Activated naive CD4-positive, alpha-beta T cell treated with anti-CD3 and anti-CD28 coated beads for 36 hours (primary cell): ENCODE measurements at regions of chr7 and their contacts with region 1.

Region 1: GRCh38 chr7:38369816-38370493 is 96.5 kb upstream of the TARP start:
- DNase-seq: peak; percentile 83
- H3K4me3 Mint-ChIP-seq: no peak overlapping the region
- H3K27ac Mint-ChIP-seq: no peak overlapping the region
- H3K4me1 Mint-ChIP-seq: peaks cover 52% of the 10 kb centered on the region
- H3K27me3 Mint-ChIP-seq: no peaks in the 10 kb centered on the region

Region 2: GRCh38 chr7:37786741-37787569 is 583.0 kb before region 1 on chr7:
- CTCF ChIA-PET with region 1: no interaction called
- intact Hi-C with region 1: loop called (anchors 5 kb)
- DNase-seq: no peak
- H3K4me3 Mint-ChIP-seq: no peak overlapping the region
- H3K27ac Mint-ChIP-seq: peak overlapping the region; percentile 53
- H3K4me1 Mint-ChIP-seq: peaks cover 6% of the 10 kb centered on the region
- H3K27me3 Mint-ChIP-seq: peaks cover 6% of the 10 kb centered on the region

Region 3: GRCh38 chr7:37916673-37917660 is 453.0 kb before region 1 on chr7 and contains the start of gene SFRP4:
- CTCF ChIA-PET with region 1: interaction called, 5 read pairs
- intact Hi-C with region 1: loop called (anchors 1 kb)
- DNase-seq: peak; percentile 17
- H3K4me3 Mint-ChIP-seq: peak within 1 kb of the TSS; percentile 22
- H3K27ac Mint-ChIP-seq: no peak within 1 kb of the TSS
- H3K4me1 Mint-ChIP-seq: peaks cover 14% of the 10 kb centered on the region
- H3K27me3 Mint-ChIP-seq: peaks cover 58% of the 10 kb centered on the region
- total RNA-seq, gene SFRP4: not detected

Region 4: GRCh38 chr7:38215735-38216670 is 154.0 kb before region 1 on chr7:
- CTCF ChIA-PET with region 1: interaction called, 190 read pairs
- intact Hi-C with region 1: loop called (anchors 1 kb)
- DNase-seq: peak; percentile 86
- H3K4me3 Mint-ChIP-seq: no peak overlapping the region
- H3K27ac Mint-ChIP-seq: no peak overlapping the region
- H3K4me1 Mint-ChIP-seq: peaks cover 4% of the 10 kb centered on the region
- H3K27me3 Mint-ChIP-seq: no peaks in the 10 kb centered on the region

Region 5: DNA sequence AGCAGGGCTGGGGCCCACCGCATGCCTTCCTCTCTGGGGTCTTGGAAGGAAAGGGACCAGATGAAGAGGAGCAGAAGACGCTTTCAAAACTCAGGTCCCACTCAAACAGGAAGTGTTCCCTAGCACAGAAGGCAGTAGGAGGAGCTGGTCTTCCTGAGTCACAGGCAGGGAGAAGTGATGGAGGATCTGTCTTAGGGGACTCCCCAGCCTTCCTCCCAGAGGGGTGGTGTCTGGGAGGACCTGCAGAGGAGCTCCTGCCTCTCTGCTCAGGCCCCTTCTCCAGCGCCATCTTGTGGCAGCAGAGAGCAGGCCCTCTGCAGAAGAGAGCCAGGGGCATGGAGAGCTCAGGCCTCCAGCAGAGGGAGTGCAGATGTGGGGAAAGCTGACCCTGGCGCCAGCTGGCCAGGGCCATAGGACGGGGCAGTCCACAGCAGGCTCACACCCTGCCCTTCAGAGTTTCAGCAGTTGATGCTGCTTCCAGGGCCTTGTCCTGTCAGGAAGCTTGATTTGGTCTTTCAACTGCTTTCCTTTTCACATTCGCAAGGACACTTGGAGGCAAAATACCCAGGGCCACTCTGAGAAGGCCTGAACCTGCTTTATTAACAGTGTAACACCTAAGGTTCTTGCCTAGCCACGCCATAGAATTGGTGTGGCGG is 34.3 kb before region 1 on chr7:
- CTCF ChIA-PET with region 1: interaction called, 41 read pairs
- intact Hi-C with region 1: loop called (anchors 5 kb)
- DNase-seq: peak; percentile 90
- H3K4me3 Mint-ChIP-seq: peak overlapping the region; percentile 43
- H3K27ac Mint-ChIP-seq: peak overlapping the region; percentile 77
- H3K4me1 Mint-ChIP-seq: peaks cover 39% of the 10 kb centered on the region
- H3K27me3 Mint-ChIP-seq: no peaks in the 10 kb centered on the region

Region 6: DNA sequence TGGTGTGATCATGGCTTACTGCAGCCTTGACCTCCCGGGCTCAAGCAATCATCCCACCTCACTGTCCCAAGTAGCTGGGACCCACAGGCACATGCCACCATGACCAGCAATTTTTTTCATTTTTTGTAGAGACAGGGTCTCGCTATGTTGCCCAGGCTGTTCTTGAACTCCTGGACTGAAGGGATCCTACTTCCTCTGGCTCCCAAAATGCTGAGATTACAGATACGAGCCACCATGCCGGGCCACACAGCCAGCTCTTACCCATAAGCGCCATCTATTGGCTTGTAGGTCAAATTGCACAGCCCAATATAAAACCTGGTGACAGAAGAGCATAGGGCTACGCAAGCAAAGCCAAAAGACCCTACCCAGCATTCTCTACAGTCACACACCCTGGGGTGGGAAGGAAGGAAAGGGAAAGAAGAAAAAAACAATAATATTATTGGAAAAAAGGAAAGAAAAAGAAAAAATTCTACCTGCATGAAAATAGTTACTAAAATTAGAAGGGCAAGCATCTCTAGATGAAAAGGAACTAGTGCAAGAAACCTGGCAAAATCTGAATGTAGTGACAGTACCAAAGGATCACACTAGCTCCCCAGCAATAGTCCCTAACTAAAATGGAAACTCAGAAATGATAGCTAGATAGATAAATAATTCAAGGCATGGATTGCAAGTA is 290.6 kb after region 1 on chr7:
- CTCF ChIA-PET with region 1: interaction called, 10 read pairs
- intact Hi-C with region 1: no loop called
- DNase-seq: peak; percentile 43
- H3K4me3 Mint-ChIP-seq: no peak overlapping the region
- H3K27ac Mint-ChIP-seq: no peak overlapping the region
- H3K4me1 Mint-ChIP-seq: no peaks in the 10 kb centered on the region
- H3K27me3 Mint-ChIP-seq: peaks cover 13% of the 10 kb centered on the region

Region 7: DNA sequence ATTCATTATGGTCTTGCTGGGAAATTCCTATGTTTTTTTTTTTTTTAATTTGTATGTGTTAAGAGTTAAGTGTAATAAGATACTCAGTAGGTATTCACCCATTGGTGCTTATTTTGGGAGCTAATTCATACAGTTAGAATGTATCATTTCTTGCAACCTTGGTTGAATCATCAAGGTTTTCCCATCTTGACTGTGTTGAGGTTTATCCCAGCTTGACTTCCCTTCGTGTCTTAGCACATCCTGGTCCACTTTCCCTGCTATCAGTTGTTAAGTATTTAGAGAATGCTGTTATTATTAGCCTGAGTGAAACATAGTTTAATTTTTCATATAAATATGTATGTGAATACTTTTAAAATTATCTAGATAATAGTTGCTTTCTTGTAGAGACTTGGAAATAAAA is 1274.2 kb after region 1 on chr7:
- CTCF ChIA-PET with region 1: no interaction called
- intact Hi-C with region 1: no loop called
- DNase-seq: no peak
- H3K4me3 Mint-ChIP-seq: no peak overlapping the region
- H3K27ac Mint-ChIP-seq: peak overlapping the region; percentile 34
- H3K4me1 Mint-ChIP-seq: peaks cover 71% of the 10 kb centered on the region
- H3K27me3 Mint-ChIP-seq: no peaks in the 10 kb centered on the region

Region 8: GRCh38 chr7:40092182-40092581 is 1722.2 kb after region 1 on chr7:
- CTCF ChIA-PET with region 1: no interaction called
- intact Hi-C with region 1: no loop called
- DNase-seq: no peak
- H3K4me3 Mint-ChIP-seq: no peak overlapping the region
- H3K27ac Mint-ChIP-seq: no peak overlapping the region
- H3K4me1 Mint-ChIP-seq: peaks cover 8% of the 10 kb centered on the region
- H3K27me3 Mint-ChIP-seq: no peaks in the 10 kb centered on the region